ENCODE measurements at regions of chrX and their contacts with region 1.

Region 1: GRCh38 chrX:78945186-78945912 is at the start of gene P2RY10:
- DNase-seq: peak; percentile 26
- ATAC-seq: peak; percentile 80
- H3K4me3 Mint-ChIP-seq: peak within 1 kb of the TSS; percentile 98
- H3K27ac Mint-ChIP-seq: peak within 1 kb of the TSS; percentile 97
- H3K4me1 Mint-ChIP-seq: peaks cover 49% of the 10 kb centered on the region
- H3K27me3 Mint-ChIP-seq: no peaks in the 10 kb centered on the region
- CTCF ChIP-seq: no peak
- total RNA-seq, gene P2RY10: 42.1 to 42.2 TPM

Region 2: DNA sequence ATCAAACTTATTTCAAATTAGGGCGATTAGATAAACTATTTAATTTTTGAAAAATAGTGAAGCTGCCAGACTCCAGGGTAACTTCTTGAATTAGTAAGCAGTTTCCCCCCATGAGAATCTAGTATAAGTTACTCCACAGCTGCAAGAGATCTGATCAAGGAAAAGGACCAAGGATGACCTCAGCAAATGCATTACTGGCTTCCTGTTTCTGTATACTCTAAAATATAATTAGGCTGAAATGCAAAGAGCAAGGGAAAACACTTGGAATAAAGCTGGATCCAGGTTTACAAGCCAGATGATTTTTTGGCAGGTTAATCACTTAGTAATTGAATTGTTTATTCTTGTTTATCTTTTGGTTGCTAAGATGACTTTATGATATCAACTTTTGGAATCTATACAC is 13.5 kb before region 1 on chrX:
- CTCF ChIA-PET with region 1: no interaction called
- POLR2A ChIA-PET with region 1: no interaction called
- intact Hi-C with region 1: no loop called
- DNase-seq: no peak
- ATAC-seq: no peak
- H3K4me3 Mint-ChIP-seq: no peak overlapping the region
- H3K27ac Mint-ChIP-seq: no peak overlapping the region
- H3K4me1 Mint-ChIP-seq: peaks cover 4% of the 10 kb centered on the region
- H3K27me3 Mint-ChIP-seq: no peaks in the 10 kb centered on the region
- CTCF ChIP-seq: no peak

Region 3: DNA sequence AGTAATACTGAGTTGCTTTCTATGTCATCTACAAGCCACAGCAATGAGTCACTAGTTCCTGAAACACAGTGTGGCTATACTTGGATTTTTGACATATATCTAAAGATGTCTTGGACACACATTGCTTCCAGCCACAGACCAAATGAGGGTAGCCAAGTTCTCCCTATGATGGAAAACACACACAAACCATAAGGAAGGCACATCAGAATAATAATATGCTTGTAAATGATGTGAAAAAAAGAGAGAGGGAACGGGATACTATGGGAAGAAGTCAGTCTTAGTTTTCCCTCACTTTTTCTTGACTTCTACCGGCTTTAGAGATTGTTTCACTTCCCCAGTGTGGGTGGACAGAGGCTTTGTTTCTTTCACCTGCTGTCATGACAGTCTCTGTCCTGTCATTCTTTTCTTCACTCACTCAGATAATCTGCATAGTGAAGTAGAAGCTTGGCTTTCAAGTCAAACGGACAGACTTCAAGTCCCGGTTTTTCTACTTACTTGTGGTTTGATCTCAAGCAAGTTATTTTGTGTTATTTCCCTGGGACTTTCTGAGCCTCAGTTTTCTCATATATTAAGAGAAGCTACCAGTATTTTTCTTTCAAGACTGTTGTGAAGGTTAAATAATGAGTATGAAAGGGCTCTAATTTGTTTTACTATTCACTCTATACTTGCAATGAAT is 34.6 kb after region 1 on chrX:
- CTCF ChIA-PET with region 1: no interaction called
- POLR2A ChIA-PET with region 1: no interaction called
- intact Hi-C with region 1: loop called (anchors 5 kb)
- DNase-seq: peak; percentile 38
- ATAC-seq: peak; percentile 93
- H3K4me3 Mint-ChIP-seq: peak overlapping the region; percentile 64
- H3K27ac Mint-ChIP-seq: peak overlapping the region; percentile 96
- H3K4me1 Mint-ChIP-seq: peaks cover 21% of the 10 kb centered on the region
- H3K27me3 Mint-ChIP-seq: no peaks in the 10 kb centered on the region
- CTCF ChIP-seq: no peak

Region 4: DNA sequence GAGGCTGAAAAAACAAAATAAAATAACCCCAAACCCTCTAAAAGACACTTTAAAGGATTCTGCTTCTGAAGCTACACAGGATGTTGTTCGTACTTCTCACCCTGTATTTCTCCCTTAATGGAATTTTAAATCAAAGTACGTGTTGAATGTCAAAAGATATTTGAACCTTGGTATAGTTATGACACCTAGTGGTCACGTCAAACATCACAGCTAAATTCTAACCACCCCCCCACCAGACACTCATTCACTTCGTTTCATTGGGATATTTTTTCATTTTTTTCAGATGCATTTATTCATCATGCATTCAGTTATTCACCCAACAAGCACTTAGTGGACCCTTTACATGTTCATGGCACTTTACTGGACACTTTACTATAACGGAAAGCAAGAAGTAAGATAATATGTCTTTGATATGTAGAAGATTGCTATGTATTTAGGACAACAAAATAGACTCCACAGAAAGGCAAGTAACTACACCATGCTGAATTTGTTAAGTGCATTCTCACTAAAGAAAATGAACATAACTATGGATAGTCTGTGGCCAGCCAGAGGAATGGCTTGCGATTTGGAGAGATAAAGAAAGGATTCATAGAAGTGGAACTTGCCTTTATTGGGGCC is 136.7 kb after region 1 on chrX:
- CTCF ChIA-PET with region 1: interaction called, 3 read pairs
- POLR2A ChIA-PET with region 1: no interaction called
- intact Hi-C with region 1: loop called (anchors 5 kb)
- DNase-seq: peak; percentile 46
- ATAC-seq: peak; percentile 77
- H3K4me3 Mint-ChIP-seq: peak overlapping the region; percentile 71
- H3K27ac Mint-ChIP-seq: peak overlapping the region; percentile 89
- H3K4me1 Mint-ChIP-seq: peaks cover 33% of the 10 kb centered on the region
- H3K27me3 Mint-ChIP-seq: no peaks in the 10 kb centered on the region
- CTCF ChIP-seq: peak; percentile 46